SK-N-SH (cell line): ENCODE measurements at regions of chr7 and their contacts with region 1.

Region 1: GRCh38 chr7:129218514-129219062 is 6.2 kb upstream of the AHCYL2 start:
- DNase-seq: peak; percentile 90
- H3K4me3 ChIP-seq: peak overlapping the region in 1 of 2 experiments; percentile 25; a peak in 1 of 4 replicates
- H3K27ac ChIP-seq: no peak overlapping the region
- H3K4me1 ChIP-seq: peaks cover 0 to 8% of the 10 kb centered on the region in 2 experiments; a peak in 1 of 4 replicates
- H3K27me3 ChIP-seq: no peaks in the 10 kb centered on the region
- CTCF ChIP-seq: peak; percentile 99
- EP300 ChIP-seq: no peak
- RAD21 ChIP-seq: peak; percentile 99

Region 2: DNA sequence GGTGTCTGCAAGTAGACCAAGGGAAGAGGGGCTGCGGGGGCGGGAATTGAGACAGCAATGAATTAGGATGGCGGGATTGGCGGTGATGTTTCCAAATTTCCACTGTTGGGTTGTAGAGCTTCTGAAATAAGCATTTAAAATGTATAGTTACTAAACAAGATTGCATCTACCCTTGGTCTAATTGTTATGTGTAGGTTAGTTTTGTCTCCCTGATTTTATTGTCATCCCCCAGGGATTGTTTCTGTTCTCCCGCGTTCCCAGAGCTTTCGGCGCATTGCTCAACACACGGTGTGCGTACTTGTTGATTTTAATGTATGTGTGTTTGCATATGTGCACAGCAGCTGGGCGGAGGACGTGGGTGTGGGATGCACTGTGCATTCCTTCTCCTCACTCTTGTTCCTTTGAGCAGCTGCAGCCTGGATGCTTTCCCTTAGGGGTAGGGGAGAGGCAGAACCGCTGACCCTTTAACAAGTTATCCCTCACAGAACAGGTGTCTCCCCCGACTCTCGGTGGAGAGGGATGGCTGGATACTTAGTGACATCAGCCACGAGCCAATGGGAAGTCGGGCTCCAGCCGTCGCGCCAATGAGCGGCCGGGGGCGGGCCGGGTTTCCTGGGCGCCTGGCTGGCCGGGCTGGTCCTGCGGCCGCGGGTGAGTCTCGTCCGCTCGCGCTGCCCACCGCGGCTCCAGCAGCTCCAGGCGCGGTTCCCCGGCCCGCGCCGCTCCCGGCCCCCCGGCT is 74.3 kb before region 1 on chr7 and contains the start of gene TSPAN33:
- CTCF ChIA-PET with region 1: interaction called, 27 read pairs
- POLR2A ChIA-PET with region 1: no interaction called
- DNase-seq: peak; percentile 99
- H3K4me3 ChIP-seq: peak within 1 kb of the TSS; percentile 60 to 66
- H3K27ac ChIP-seq: no peak within 1 kb of the TSS
- H3K4me1 ChIP-seq: peaks cover 0 to 25% of the 10 kb centered on the region in 2 experiments; a peak in 2 of 4 replicates
- H3K27me3 ChIP-seq: peaks cover 27% of the 10 kb centered on the region
- CTCF ChIP-seq: no peak
- EP300 ChIP-seq: no peak
- RAD21 ChIP-seq: no peak
- polyA plus RNA-seq, gene TSPAN33: 6.9 and 7.2 TPM in 2 replicates

Region 3: GRCh38 chr7:129238546-129238945 is 20.0 kb after region 1 on chr7:
- CTCF ChIA-PET with region 1: interaction called, 121 read pairs
- POLR2A ChIA-PET with region 1: no interaction called
- DNase-seq: no peak
- H3K4me3 ChIP-seq: no peak overlapping the region
- H3K27ac ChIP-seq: no peak overlapping the region
- H3K4me1 ChIP-seq: no peaks in the 10 kb centered on the region
- H3K27me3 ChIP-seq: no peaks in the 10 kb centered on the region
- CTCF ChIP-seq: no peak
- EP300 ChIP-seq: no peak
- RAD21 ChIP-seq: no peak

Region 4: GRCh38 chr7:129285111-129285510 is 66.5 kb after region 1 on chr7:
- CTCF ChIA-PET with region 1: interaction called, 105 read pairs
- POLR2A ChIA-PET with region 1: no interaction called
- DNase-seq: no peak
- H3K4me3 ChIP-seq: no peak overlapping the region
- H3K27ac ChIP-seq: no peak overlapping the region
- H3K4me1 ChIP-seq: peaks cover 0 to 6% of the 10 kb centered on the region in 2 experiments; a peak in 1 of 4 replicates
- H3K27me3 ChIP-seq: no peaks in the 10 kb centered on the region
- CTCF ChIP-seq: no peak
- EP300 ChIP-seq: no peak
- RAD21 ChIP-seq: no peak

Region 5: GRCh38 chr7:129343099-129343700 is 124.6 kb after region 1 on chr7:
- CTCF ChIA-PET with region 1: interaction called, 89 read pairs
- POLR2A ChIA-PET with region 1: no interaction called
- DNase-seq: peak; percentile 64
- H3K4me3 ChIP-seq: no peak overlapping the region
- H3K27ac ChIP-seq: no peak overlapping the region
- H3K4me1 ChIP-seq: peaks cover 0 to 6% of the 10 kb centered on the region in 2 experiments; a peak in 1 of 4 replicates
- H3K27me3 ChIP-seq: no peaks in the 10 kb centered on the region
- CTCF ChIP-seq: peak; percentile 98
- EP300 ChIP-seq: no peak
- RAD21 ChIP-seq: peak; percentile 81

Region 6: GRCh38 chr7:129462420-129462819 is 243.8 kb after region 1 on chr7:
- CTCF ChIA-PET with region 1: interaction called, 128 read pairs
- POLR2A ChIA-PET with region 1: no interaction called
- DNase-seq: no peak
- H3K4me3 ChIP-seq: no peak overlapping the region
- H3K27ac ChIP-seq: no peak overlapping the region
- H3K4me1 ChIP-seq: peaks cover 0 to 11% of the 10 kb centered on the region in 2 experiments; a peak in 2 of 4 replicates
- H3K27me3 ChIP-seq: no peaks in the 10 kb centered on the region
- CTCF ChIP-seq: no peak
- EP300 ChIP-seq: no peak
- RAD21 ChIP-seq: no peak

Region 7: GRCh38 chr7:129644634-129645230 is 426.1 kb after region 1 on chr7:
- CTCF ChIA-PET with region 1: interaction called, 36 read pairs
- POLR2A ChIA-PET with region 1: interaction called, 3 read pairs
- DNase-seq: peak; percentile 53
- H3K4me3 ChIP-seq: no peak overlapping the region
- H3K27ac ChIP-seq: no peak overlapping the region
- H3K4me1 ChIP-seq: peaks cover 2 to 9% of the 10 kb centered on the region in 2 experiments; a peak in 2 of 4 replicates
- H3K27me3 ChIP-seq: no peaks in the 10 kb centered on the region
- CTCF ChIP-seq: peak; percentile 84
- EP300 ChIP-seq: no peak
- RAD21 ChIP-seq: peak; percentile 89